ENCODE measurements at regions of chr7 and their contacts with region 1.

Region 1: DNA sequence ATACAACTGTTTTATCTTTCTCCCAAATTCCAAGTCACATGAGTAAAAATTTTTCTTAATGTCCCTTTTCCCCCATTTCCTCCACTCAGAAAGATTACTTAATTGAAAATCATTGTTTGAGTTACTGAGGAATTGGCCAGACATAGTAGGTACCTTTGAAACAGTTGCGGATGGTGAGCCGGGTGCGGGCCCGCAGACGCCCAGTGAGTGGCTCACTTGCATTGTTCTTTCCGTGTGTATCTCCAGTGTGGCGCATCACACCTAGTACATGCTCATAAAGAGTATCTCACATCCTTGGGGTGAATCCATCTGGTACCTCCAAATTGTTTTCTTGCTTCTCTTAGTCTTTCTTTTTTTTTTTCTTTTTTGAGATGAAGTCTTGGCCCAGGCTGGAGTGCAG is 14.3 kb downstream of the TRRAP start:
- DNase-seq: no peak
- CTCF ChIP-seq: no peak

Region 2: GRCh38 chr7:98878365-98879165 is 14.0 kb before region 1 on chr7 and contains the start of gene TRRAP:
- CTCF ChIA-PET with region 1: interaction called, 11 read pairs
- POLR2A ChIA-PET with region 1: no interaction called
- DNase-seq: peak; percentile 89
- CTCF ChIP-seq: peak; percentile 86

Measured in GM10248 (cell line).